HEK293 (cell line): ENCODE measurements at regions of chr19 and their contacts with region 1.

Region 1: DNA sequence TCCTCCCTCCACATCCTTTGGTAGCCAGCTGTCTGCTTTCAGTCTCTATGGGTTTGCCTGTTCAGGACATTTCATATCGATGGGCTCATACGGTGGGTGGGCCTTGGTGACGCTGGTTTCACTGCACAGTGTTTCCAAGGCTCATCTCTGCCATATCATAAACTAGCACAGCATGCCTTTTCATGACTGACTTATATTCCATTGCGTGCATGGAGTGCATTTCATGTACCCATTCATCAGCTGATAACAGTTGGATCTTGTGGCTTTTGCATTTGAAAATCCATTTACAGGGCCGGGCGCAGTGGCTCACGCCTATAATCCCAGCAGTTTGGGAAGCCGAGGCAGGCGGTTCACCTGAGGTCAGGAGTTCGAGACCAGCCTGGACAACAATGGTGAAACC is 69.9 kb downstream of the TDRD12 start:
- H3K4me3 ChIP-seq: no peak overlapping the region
- H3K27ac ChIP-seq: no peak overlapping the region
- H3K4me1 ChIP-seq: 0 out of 2 replicates have a peak, but pooled peaks cover 7% of the 10 kb centered on the region
- CTCF ChIP-seq: no peak

Region 2: DNA sequence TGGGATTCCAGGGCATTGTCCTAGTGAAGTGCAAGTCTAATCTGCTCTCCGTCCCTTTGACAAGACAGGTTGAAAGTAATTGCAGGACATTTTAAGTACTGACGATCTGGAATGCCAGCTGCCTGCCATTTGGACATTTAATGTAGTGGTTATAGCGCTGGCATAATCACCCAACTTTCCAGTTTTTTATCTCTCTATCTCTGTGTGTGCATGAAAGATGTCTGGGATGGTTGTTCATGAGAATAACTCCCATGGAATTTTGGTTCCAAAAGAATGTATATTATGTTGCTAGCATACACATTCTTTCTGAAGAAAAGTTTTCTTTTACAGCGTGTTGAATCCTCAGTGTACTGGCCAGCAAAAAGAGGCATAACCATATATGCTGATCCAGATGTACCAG is 16.3 kb before region 1 on chr19:
- CTCF ChIA-PET with region 1: interaction called, 10 read pairs
- POLR2A ChIA-PET with region 1: interaction called, 3 read pairs
- H3K4me3 ChIP-seq: no peak overlapping the region
- H3K27ac ChIP-seq: no peak overlapping the region
- H3K4me1 ChIP-seq: no peaks in the 10 kb centered on the region
- CTCF ChIP-seq: no peak

Region 3: GRCh38 chr19:32813862-32814425 is 24.5 kb after region 1 on chr19:
- CTCF ChIA-PET with region 1: no interaction called
- POLR2A ChIA-PET with region 1: no interaction called
- H3K4me3 ChIP-seq: no peak overlapping the region
- H3K27ac ChIP-seq: no peak overlapping the region
- H3K4me1 ChIP-seq: peaks cover 4% of the 10 kb centered on the region
- CTCF ChIP-seq: no peak